ENCODE measurements at regions of chr6 and their contacts with region 1.

Region 1: GRCh38 chr6:36623547-36624459 is 29.6 kb downstream of the SRSF3 start:
- DNase-seq: peak; percentile 54 to 85 (median 80)
- ATAC-seq: peak; percentile 95
- H3K4me3 ChIP-seq: no peak overlapping the region
- H3K4me3 Mint-ChIP-seq: no peak overlapping the region
- H3K27ac ChIP-seq: no peak overlapping the region
- H3K27ac Mint-ChIP-seq: no peak overlapping the region
- H3K4me1 ChIP-seq: peaks cover 3% of the 10 kb centered on the region
- H3K4me1 Mint-ChIP-seq: peaks cover 8% of the 10 kb centered on the region
- H3K27me3 ChIP-seq: no peaks in the 10 kb centered on the region
- H3K27me3 Mint-ChIP-seq: no peaks in the 10 kb centered on the region
- CTCF ChIP-seq: peak; percentile 78

Region 2: DNA sequence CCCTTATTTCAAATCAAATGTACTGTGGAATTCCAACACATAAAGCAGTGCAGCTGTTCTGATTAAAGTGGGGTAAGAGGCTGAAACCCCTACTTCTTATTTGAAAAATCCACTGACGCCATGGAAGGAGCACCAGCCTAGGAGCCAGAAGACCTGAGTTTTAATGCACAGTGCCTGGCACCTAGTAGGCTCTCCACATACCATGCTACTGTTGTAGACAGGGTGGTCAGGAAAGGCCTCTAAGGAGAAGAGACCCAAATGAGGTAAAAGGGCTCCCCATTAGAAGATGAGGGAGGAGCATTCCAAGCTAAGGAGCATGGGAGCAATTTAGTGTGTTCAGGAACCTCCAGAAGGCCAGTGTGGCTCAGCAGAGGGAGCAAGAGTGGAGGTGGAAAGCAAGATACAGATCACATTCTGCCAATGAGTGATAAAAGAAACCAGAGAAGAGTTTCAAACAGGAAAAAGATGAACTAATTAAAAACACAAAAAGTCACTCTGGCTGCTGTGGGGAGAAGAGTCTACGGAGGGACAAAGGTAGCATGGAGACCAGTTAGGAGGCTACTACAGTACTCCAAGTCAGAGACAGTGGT is 1376.1 kb before region 1 on chr6:
- CTCF ChIA-PET with region 1: no interaction called
- POLR2A ChIA-PET with region 1: no interaction called
- intact Hi-C with region 1: no loop called
- DNase-seq: no peak
- ATAC-seq: no peak
- H3K4me3 ChIP-seq: no peak overlapping the region
- H3K4me3 Mint-ChIP-seq: no peak overlapping the region
- H3K27ac ChIP-seq: no peak overlapping the region
- H3K27ac Mint-ChIP-seq: peak overlapping the region; percentile 33
- H3K4me1 ChIP-seq: no peaks in the 10 kb centered on the region
- H3K4me1 Mint-ChIP-seq: peaks cover 7% of the 10 kb centered on the region
- H3K27me3 ChIP-seq: no peaks in the 10 kb centered on the region
- H3K27me3 Mint-ChIP-seq: no peaks in the 10 kb centered on the region
- CTCF ChIP-seq: no peak

Region 3: DNA sequence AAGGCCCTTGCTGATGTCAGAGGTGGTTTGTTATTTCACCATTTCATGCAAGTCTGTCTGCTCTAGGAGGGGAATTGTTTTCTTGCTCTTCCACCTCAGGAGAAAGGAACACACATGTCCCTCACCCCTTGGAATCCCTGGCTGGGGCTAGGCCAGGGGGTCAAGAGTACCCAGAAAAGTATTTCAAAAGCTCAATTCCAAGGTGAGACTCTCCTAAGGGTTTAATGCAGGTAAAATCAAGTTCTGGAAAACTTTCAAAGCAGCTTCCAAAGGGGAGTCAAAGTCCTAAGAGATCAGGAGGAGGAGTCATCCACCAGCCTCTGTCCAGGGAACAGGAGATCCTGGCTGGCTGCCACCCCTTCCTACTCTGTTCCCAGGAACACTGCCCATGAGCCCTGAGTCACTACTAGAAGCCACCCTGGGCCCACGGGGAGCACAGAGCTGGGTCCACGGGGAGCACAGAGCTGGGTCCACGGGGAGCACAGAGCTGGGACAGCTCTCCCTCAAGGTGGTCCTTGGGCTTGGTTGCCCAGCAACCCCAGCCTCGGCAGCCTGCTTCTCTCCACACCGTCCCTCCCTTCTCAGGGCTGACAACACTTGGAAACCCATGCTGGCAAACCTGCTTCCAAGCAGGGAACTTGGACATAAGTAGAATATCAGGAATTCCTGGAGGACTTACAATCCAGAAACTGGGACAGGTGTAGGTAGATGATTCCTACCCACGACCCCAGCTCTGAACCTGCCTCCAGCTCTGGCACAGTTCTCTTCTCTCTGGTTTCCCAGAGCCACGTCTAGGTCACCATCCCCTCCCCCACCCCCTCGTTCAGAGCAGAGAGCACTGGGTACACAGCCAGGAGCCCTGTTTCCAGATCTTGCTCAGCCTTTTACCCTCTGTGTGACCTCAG is 19.4 kb after region 1 on chr6:
- CTCF ChIA-PET with region 1: interaction called, 10 read pairs
- POLR2A ChIA-PET with region 1: no interaction called
- intact Hi-C with region 1: no loop called
- DNase-seq: no peak
- ATAC-seq: no peak
- H3K4me3 ChIP-seq: no peak overlapping the region
- H3K4me3 Mint-ChIP-seq: no peak overlapping the region
- H3K27ac ChIP-seq: no peak overlapping the region
- H3K27ac Mint-ChIP-seq: no peak overlapping the region
- H3K4me1 ChIP-seq: no peaks in the 10 kb centered on the region
- H3K4me1 Mint-ChIP-seq: no peaks in the 10 kb centered on the region
- H3K27me3 ChIP-seq: no peaks in the 10 kb centered on the region
- H3K27me3 Mint-ChIP-seq: no peaks in the 10 kb centered on the region
- CTCF ChIP-seq: no peak

Region 4: GRCh38 chr6:36759148-36759759 is 135.5 kb after region 1 on chr6:
- CTCF ChIA-PET with region 1: interaction called, 24 read pairs
- POLR2A ChIA-PET with region 1: no interaction called
- intact Hi-C with region 1: loop called (anchors 1 kb)
- DNase-seq: peak; percentile 48 to 83 (median 81)
- ATAC-seq: peak; percentile 50
- H3K4me3 ChIP-seq: no peak overlapping the region
- H3K4me3 Mint-ChIP-seq: no peak overlapping the region
- H3K27ac ChIP-seq: no peak overlapping the region
- H3K27ac Mint-ChIP-seq: no peak overlapping the region
- H3K4me1 ChIP-seq: peaks cover 15% of the 10 kb centered on the region
- H3K4me1 Mint-ChIP-seq: peaks cover 31% of the 10 kb centered on the region
- H3K27me3 ChIP-seq: no peaks in the 10 kb centered on the region
- H3K27me3 Mint-ChIP-seq: no peaks in the 10 kb centered on the region
- CTCF ChIP-seq: peak; percentile 96

Region 5: DNA sequence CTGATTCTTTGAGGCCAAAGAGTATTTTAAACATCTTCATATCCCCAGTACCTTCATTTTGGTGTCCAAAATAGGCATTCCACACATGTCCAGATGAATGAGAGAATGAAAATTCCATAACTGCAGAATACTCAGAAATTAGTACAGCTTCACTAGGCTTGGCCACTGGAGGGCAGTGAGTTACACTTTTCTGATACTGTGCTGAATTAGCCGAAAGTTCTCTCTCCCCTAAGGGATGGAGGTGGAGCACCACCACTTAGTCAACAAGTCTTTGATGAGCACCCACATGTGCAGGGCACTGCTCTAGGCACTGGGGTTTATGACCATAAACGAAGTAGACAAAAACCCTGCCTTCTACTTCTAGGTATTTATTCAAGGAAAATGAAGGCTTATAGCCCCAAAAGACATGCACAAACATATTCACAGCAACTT is 680.1 kb after region 1 on chr6:
- CTCF ChIA-PET with region 1: no interaction called
- POLR2A ChIA-PET with region 1: no interaction called
- intact Hi-C with region 1: no loop called
- DNase-seq: no peak
- ATAC-seq: no peak
- H3K4me3 ChIP-seq: no peak overlapping the region
- H3K4me3 Mint-ChIP-seq: no peak overlapping the region
- H3K27ac ChIP-seq: no peak overlapping the region
- H3K27ac Mint-ChIP-seq: no peak overlapping the region
- H3K4me1 ChIP-seq: no peaks in the 10 kb centered on the region
- H3K4me1 Mint-ChIP-seq: no peaks in the 10 kb centered on the region
- H3K27me3 ChIP-seq: no peaks in the 10 kb centered on the region
- H3K27me3 Mint-ChIP-seq: no peaks in the 10 kb centered on the region
- CTCF ChIP-seq: no peak

Measured in CD8-positive, alpha-beta T cell (primary cell).